Activated CD8-positive, alpha-beta memory T cell treated with anti-CD3 and anti-CD28 coated beads, Interleukin-2, amount 10 ng/mL, durations not matched to agents 7 days and 5 days (primary cell): ENCODE measurements at regions of chr14 and their contacts with region 1.

Region 1: GRCh38 chr14:49598485-49599300 is at the start of gene LRR1:
- DNase-seq: peak; percentile 90
- ATAC-seq: peak; percentile 88
- H3K4me3 Mint-ChIP-seq: peak within 1 kb of the TSS; percentile 99
- H3K27ac Mint-ChIP-seq: peak within 1 kb of the TSS; percentile 99
- H3K4me1 Mint-ChIP-seq: peaks cover 30% of the 10 kb centered on the region
- H3K27me3 Mint-ChIP-seq: no peaks in the 10 kb centered on the region
- total RNA-seq, gene LRR1: 64.4 to 71.3 TPM

Region 2: DNA sequence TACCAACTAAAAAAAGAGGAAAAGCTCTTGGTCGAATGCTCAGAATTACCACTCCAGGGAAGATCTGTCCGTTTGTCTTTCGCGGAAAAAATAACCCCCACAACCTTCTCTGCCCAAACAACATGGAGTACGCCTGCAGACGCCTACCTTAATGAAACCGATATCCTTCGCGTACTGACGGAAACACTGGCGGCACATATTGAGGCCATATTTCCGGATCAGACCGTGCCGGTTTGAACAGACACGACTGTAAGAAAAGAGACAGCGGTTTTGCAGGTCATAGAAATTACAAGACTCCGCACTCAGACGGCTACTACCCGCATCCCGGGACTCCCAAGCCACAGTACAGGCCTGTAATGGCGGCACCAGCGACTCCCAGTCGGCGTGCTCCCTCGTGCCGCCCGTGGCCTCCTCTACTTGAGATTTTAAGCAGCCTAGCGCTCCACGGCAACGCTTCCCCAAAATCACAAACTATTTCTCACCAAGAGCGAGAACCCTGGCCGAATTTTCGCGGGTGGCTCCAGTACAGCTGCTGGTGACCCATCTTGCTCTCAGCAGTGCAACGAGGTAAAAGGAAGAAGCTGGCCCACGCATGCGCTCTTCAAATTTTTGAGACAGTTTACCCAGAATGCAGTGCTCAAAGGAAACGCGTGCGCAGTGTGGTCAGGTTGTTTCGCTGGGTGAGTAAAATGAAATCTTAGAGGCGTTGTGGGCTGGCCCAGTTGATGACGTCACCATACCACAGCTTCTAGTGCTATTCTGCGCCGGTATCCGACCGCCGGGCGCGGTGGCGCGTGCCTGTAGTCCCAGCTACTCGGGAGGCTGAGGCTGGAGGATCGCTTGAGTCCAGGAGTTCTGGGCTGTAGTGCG is 12.7 kb before region 1 on chr14 and contains the start of gene RPS29:
- CTCF ChIA-PET with region 1: interaction called, 78 read pairs
- DNase-seq: peak; percentile 99
- ATAC-seq: peak; percentile 87
- H3K4me3 Mint-ChIP-seq: peak within 1 kb of the TSS; percentile 89
- H3K27ac Mint-ChIP-seq: peak within 1 kb of the TSS; percentile 99
- H3K4me1 Mint-ChIP-seq: peaks cover 38% of the 10 kb centered on the region
- H3K27me3 Mint-ChIP-seq: no peaks in the 10 kb centered on the region
- total RNA-seq, gene RPS29: 1,378 to 1,419 TPM

Region 3: GRCh38 chr14:49620182-49621113 is 21.8 kb after region 1 on chr14 and contains the starts of genes MGAT2 and RPL36AL:
- CTCF ChIA-PET with region 1: interaction called, 17 read pairs
- DNase-seq: peak; percentile 98
- ATAC-seq: peak; percentile 88
- H3K4me3 Mint-ChIP-seq: peak within 1 kb of the TSS; percentile 84
- H3K27ac Mint-ChIP-seq: peak within 1 kb of the TSS; percentile 92
- H3K4me1 Mint-ChIP-seq: peaks cover 46% of the 10 kb centered on the region
- H3K27me3 Mint-ChIP-seq: no peaks in the 10 kb centered on the region
- total RNA-seq, gene MGAT2: 68.4 to 75.9 TPM
- total RNA-seq, gene RPL36AL: 245 to 248 TPM